ENCODE measurements at regions of chr16 and their contacts with region 1.

Region 1: GRCh38 chr16:19886073-19886941 is 1.7 kb upstream of the GPRC5B start:
- DNase-seq: peak; percentile 71
- H3K4me3 Mint-ChIP-seq: peak overlapping the region; percentile 73
- H3K27ac Mint-ChIP-seq: peak overlapping the region; percentile 50
- H3K4me1 Mint-ChIP-seq: peaks cover 16% of the 10 kb centered on the region
- H3K27me3 Mint-ChIP-seq: peaks cover 34% of the 10 kb centered on the region

Region 2: DNA sequence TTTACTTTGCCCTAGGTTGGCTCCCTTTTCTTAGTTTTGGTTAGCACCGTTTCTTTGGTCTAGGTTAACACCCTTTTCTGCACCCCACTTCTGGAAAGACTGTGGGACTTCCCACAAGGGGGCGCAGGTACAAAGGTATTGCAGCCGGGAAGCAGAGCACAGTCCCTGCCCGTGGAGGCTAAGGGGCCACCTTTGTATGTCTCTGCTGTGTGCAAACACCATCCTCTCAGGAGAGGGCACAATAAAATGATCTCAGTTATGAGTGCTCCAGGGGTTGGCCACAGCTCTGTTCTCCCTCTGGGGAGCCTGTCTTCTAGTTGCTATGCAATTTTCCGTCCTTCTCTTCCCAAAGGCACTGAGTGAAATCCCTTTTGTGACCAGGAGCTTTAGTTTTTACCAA is 497.1 kb before region 1 on chr16:
- intact Hi-C with region 1: loop called (anchors 5 kb)
- DNase-seq: peak; percentile 17
- H3K4me3 Mint-ChIP-seq: no peak overlapping the region
- H3K27ac Mint-ChIP-seq: no peak overlapping the region
- H3K4me1 Mint-ChIP-seq: peaks cover 14% of the 10 kb centered on the region
- H3K27me3 Mint-ChIP-seq: peaks cover 29% of the 10 kb centered on the region

Region 3: DNA sequence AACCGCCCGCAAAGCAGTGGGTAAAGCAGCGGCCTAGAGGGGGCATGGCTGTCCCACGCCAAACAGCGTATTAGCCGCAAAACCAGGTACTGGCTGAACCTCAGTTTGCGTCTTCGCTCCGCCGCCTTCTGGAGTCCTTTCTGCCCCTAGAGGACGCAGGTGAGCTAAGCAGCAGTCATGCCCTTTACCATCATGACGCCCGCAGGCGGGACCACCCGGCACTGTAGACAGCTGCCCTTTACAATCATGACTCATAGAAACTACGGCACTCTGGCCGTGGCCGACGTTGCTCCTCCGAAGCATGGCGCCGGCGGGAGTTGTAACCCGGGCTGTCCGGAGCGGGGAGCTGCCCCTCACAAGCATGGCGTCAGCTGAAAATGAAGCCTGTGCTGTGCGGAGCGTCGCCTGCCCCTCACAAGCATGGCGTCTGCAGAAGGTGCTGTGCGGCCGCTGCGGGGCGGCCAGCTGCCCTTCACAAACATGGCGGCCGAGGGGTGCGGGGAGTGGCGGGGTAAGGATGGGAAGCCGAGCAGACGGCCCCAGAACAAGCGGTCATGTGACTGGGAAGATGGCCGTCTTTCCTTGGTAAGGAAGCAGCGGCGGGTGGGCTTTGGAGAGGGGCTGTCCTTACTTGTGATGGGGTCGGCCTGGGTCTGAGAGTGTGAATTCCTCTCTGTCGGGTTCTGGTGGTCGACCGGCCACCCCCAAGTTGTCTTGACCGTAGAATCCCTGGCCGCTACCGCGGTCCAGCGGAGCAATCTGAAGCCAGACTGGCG is 331.0 kb before region 1 on chr16 and contains the start of gene VPS35L:
- intact Hi-C with region 1: loop called (anchors 1 kb)
- DNase-seq: peak; percentile 93
- H3K4me3 Mint-ChIP-seq: peak within 1 kb of the TSS; percentile 93
- H3K27ac Mint-ChIP-seq: peak within 1 kb of the TSS; percentile 93
- H3K4me1 Mint-ChIP-seq: peaks cover 14% of the 10 kb centered on the region
- H3K27me3 Mint-ChIP-seq: no peaks in the 10 kb centered on the region
- total RNA-seq, gene VPS35L: 36.2 and 37.4 TPM in 2 replicates

Region 4: GRCh38 chr16:19583665-19584300 is 302.5 kb before region 1 on chr16:
- intact Hi-C with region 1: loop called (anchors 1 kb)
- DNase-seq: no peak
- H3K4me3 Mint-ChIP-seq: no peak overlapping the region
- H3K27ac Mint-ChIP-seq: no peak overlapping the region
- H3K4me1 Mint-ChIP-seq: no peaks in the 10 kb centered on the region
- H3K27me3 Mint-ChIP-seq: no peaks in the 10 kb centered on the region

Region 5: DNA sequence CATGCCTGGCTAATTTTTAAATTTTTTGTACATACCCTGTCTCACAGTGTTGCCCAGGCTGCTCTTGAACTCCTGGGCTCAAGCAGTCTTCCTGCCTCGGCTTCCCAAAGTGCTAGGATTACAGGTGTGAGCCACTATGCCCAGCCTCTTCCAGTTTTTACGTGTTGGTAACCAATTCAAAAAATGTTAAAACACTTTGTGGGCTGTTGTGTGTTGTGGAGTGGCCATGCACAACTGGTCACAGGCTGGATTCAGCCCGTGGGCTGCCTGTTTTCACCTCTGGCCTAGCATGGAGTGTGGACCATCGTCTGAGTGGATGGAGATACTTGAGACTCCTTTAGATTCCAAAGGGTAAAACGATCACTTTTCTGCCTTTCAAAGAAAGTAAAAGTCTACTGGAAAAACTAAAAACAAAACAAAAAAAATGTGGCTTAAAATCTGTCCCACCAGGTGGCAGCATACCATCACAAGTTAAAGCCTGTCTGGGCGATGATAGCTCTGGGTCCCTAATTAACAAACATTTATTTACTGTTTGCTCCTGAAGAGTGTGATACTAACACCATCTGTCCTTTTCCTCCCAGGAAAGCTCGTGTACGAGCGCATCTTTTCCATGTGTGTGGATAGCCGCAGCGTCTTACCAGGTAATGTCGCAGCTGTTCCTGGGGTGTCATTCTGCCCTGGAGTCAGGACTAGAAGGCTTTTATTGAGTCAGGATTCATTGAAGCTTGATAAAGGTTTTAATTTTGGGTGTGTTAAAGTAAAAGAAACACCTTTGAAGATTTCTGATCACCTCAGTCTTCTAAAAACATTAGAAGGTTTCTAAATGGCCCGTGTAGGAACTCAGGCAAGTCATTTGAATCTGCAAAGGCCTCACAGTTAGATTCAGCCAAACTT is 285.0 kb before region 1 on chr16:
- intact Hi-C with region 1: loop called (anchors 1 kb)
- DNase-seq: no peak
- H3K4me3 Mint-ChIP-seq: no peak overlapping the region
- H3K27ac Mint-ChIP-seq: no peak overlapping the region
- H3K4me1 Mint-ChIP-seq: no peaks in the 10 kb centered on the region
- H3K27me3 Mint-ChIP-seq: no peaks in the 10 kb centered on the region

Region 6: GRCh38 chr16:19696328-19696727 is 190.0 kb before region 1 on chr16:
- intact Hi-C with region 1: loop called (anchors 5 kb)
- DNase-seq: no peak
- H3K4me3 Mint-ChIP-seq: no peak overlapping the region
- H3K27ac Mint-ChIP-seq: no peak overlapping the region
- H3K4me1 Mint-ChIP-seq: peaks cover 25% of the 10 kb centered on the region
- H3K27me3 Mint-ChIP-seq: no peaks in the 10 kb centered on the region

Region 7: DNA sequence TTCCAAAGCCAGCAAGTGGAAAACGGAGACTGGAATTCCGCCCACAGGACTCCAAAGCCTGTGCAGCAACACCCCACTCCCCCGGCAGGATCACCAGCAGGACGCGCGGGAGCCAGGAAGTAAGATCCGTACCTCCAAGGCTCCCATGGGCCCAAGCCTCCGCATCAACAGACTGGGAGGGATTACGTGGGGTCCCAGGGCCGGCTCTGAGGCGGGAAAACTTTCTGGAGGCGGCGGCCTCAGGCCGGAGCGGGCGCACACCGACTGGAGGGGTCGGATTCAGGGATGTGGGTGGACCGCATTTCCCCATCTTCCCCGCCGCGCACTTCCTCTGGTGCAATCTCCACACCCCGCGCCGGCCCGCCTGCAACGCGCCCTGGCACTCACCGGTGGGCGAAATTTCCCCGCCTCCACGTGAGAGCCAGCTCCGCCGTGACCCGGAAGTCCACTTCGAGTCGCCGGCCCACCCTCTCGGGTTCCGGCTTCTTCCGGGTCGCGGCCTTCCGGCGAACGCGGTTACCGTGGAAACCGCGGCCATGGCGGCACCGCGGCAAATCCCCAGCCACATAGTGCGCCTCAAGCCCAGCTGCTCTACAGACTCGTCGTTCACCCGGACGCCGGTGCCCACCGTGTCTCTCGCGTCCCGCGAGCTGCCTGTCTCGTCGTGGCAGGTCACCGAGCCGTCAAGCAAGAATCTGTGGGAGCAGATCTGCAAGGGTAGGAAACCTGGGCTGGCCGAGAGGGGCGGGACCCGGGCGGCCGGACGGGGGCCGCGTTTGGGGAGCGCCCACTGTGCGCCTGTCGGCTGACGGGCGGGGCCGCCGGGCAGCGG is 168.3 kb before region 1 on chr16 and contains the starts of genes IQCK and KNOP1:
- intact Hi-C with region 1: loop called (anchors 1 kb)
- DNase-seq: peak; percentile 87
- H3K4me3 Mint-ChIP-seq: peak within 1 kb of the TSS; percentile 95
- H3K27ac Mint-ChIP-seq: peak within 1 kb of the TSS; percentile 88
- H3K4me1 Mint-ChIP-seq: peaks cover 28% of the 10 kb centered on the region
- H3K27me3 Mint-ChIP-seq: no peaks in the 10 kb centered on the region
- total RNA-seq, gene IQCK: 1.1 and 2.0 TPM in 2 replicates
- total RNA-seq, gene KNOP1: 35.3 and 36.0 TPM in 2 replicates

Region 8: GRCh38 chr16:19817122-19817521 is 69.2 kb before region 1 on chr16:
- intact Hi-C with region 1: no loop called
- DNase-seq: no peak
- H3K4me3 Mint-ChIP-seq: no peak overlapping the region
- H3K27ac Mint-ChIP-seq: no peak overlapping the region
- H3K4me1 Mint-ChIP-seq: no peaks in the 10 kb centered on the region
- H3K27me3 Mint-ChIP-seq: peaks cover 5% of the 10 kb centered on the region

Region 9: GRCh38 chr16:19926449-19927390 is 40.4 kb after region 1 on chr16:
- intact Hi-C with region 1: no loop called
- DNase-seq: no peak
- H3K4me3 Mint-ChIP-seq: no peak overlapping the region
- H3K27ac Mint-ChIP-seq: no peak overlapping the region
- H3K4me1 Mint-ChIP-seq: no peaks in the 10 kb centered on the region
- H3K27me3 Mint-ChIP-seq: no peaks in the 10 kb centered on the region

Region 10: DNA sequence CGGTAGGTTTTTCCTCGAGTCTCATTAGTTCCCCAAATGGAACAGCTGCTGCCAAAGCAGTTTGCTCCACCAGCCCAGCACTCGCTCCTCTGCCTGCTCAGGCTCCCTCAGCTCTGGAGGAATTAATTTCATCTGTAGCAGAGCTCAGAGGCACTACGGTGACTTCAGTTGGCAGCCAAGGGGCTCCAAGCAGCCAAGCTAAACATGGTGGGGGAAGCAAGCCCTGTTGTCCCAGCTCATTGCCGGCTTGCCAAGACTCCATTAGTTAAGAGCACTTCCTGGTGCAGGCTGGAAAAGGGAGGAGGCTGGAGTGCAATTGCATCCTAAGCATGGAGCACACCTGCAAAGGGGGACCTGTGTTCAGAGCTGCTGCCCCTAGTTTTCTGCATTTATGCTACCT is 77.0 kb after region 1 on chr16:
- intact Hi-C with region 1: no loop called
- DNase-seq: no peak
- H3K4me3 Mint-ChIP-seq: no peak overlapping the region
- H3K27ac Mint-ChIP-seq: no peak overlapping the region
- H3K4me1 Mint-ChIP-seq: no peaks in the 10 kb centered on the region
- H3K27me3 Mint-ChIP-seq: no peaks in the 10 kb centered on the region